ENCODE measurements at regions of chr5 and their contacts with region 1.

Region 1: DNA sequence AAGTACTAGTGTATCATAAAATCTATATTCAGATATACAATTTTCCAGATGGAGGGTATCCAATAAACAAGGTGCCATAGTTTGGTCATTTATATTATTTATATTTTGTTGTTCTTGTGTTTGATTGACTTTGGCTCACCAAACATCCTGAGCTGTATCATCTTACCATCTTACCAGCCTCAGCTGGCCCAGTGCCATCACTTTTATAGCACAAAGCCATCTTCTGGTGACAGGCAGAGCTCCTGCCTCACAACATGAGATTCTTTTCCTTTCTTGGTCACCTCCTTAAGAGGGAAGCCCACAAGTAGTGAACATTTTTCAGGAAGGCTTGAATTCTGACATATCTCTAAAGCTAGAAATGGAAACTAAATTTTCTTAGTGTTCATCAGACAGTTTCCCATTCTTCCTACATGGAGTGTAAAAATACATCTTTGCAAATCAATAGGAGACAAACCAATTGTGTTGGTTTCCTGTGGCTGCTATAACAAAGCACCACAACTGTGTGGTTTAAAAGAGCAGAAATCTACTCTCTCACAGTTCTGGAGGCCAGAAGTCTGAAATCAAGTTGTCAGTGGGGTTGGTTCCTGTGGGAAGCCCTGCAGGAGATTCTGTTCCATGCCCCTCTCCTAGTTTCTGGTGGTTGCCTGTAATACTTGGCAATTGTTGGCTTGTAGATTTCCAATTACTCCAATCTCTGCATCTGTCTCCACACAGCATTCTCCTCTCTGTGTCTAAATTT is 341.8 kb downstream of the MAN2A1 start:
- H3K4me3 Mint-ChIP-seq: no peak overlapping the region
- H3K27ac Mint-ChIP-seq: no peak overlapping the region
- H3K4me1 Mint-ChIP-seq: no peaks in the 10 kb centered on the region
- H3K27me3 Mint-ChIP-seq: no peaks in the 10 kb centered on the region

Region 2: DNA sequence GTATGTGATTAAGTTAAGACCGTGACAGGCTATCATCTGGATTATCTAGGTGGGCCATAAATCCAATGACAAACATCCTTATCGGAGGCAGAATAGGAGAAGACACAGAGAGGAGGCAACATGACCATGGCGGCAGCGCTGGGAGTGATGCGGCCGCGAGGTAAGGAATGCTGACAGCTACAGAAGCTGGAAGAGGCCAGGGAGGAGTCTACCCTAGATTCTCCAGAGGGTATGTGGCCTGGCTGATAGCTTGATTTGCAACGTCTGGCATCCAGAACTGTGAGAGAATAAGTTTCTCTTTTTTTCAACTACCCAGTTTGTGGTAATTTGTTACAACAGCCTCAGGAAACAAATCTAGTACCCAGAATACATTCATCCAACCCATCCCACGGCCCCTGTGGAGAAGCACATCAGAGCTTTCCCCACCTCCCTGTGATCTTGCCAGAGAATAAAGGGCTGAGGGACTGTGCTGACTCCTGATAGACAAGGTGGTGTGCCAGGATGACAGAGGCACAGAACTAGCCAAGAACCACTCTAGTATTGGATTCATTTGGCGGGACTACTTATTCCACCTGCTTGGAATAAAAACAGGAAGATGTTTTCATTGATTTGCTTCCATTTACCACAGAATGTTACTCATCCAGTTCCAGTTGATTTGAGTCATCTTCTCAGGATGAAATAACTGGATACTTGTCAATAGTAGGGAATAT is 154.5 kb before region 1 on chr5:
- intact Hi-C with region 1: loop called (anchors 10 kb)
- H3K4me3 Mint-ChIP-seq: no peak overlapping the region
- H3K27ac Mint-ChIP-seq: no peak overlapping the region
- H3K4me1 Mint-ChIP-seq: no peaks in the 10 kb centered on the region
- H3K27me3 Mint-ChIP-seq: peaks cover 2% of the 10 kb centered on the region